Activated B cell treated with CpG ODN at 0.5 μM for 24 hours (primary cell): ENCODE measurements at regions of chr3 and their contacts with region 1.

Region 1: GRCh38 chr3:150546226-150547044 is at the starts of genes EIF2A and SERP1:
- DNase-seq: peak; percentile 98
- ATAC-seq: peak; percentile 92
- H3K4me3 Mint-ChIP-seq: peak within 1 kb of the TSS; percentile 96
- H3K27ac Mint-ChIP-seq: peak within 1 kb of the TSS; percentile 99
- H3K4me1 Mint-ChIP-seq: peaks cover 50% of the 10 kb centered on the region
- H3K27me3 Mint-ChIP-seq: no peaks in the 10 kb centered on the region
- CTCF ChIP-seq: no peak
- total RNA-seq, gene EIF2A: 105 and 109 TPM in 2 replicates
- total RNA-seq, gene SERP1: 87.2 and 88.2 TPM in 2 replicates

Region 2: DNA sequence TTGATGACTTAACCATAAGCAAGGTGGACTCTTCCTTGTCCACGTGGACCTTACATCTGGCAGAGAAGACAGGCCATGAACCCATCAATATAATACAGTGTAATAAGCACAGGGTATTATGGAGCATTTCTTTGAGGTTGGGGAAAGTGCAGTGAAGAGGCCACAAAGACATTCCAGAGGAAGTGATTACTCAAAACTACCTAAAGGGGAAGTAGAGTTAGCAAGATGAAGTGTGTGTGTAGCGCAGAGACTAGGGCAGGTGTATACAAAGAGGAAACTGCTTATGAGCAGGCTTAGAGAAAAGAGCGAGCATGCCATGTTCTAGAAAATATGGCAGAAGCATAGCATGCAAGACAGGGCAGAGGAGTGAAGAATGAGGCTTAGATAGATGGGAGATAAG is 1342.7 kb before region 1 on chr3:
- CTCF ChIA-PET with region 1: no interaction called
- POLR2A ChIA-PET with region 1: no interaction called
- intact Hi-C with region 1: no loop called
- DNase-seq: no peak
- ATAC-seq: peak; percentile 97
- H3K4me3 Mint-ChIP-seq: peak overlapping the region; percentile 17
- H3K27ac Mint-ChIP-seq: peak overlapping the region; percentile 54
- H3K4me1 Mint-ChIP-seq: peaks cover 18% of the 10 kb centered on the region
- H3K27me3 Mint-ChIP-seq: no peaks in the 10 kb centered on the region
- CTCF ChIP-seq: no peak

Region 3: GRCh38 chr3:150627557-150627956 is 81.1 kb after region 1 on chr3:
- CTCF ChIA-PET with region 1: no interaction called
- POLR2A ChIA-PET with region 1: no interaction called
- intact Hi-C with region 1: no loop called
- DNase-seq: no peak
- ATAC-seq: no peak
- H3K4me3 Mint-ChIP-seq: no peak overlapping the region
- H3K27ac Mint-ChIP-seq: no peak overlapping the region
- H3K4me1 Mint-ChIP-seq: peaks cover 2% of the 10 kb centered on the region
- H3K27me3 Mint-ChIP-seq: no peaks in the 10 kb centered on the region
- CTCF ChIP-seq: no peak

Region 4: DNA sequence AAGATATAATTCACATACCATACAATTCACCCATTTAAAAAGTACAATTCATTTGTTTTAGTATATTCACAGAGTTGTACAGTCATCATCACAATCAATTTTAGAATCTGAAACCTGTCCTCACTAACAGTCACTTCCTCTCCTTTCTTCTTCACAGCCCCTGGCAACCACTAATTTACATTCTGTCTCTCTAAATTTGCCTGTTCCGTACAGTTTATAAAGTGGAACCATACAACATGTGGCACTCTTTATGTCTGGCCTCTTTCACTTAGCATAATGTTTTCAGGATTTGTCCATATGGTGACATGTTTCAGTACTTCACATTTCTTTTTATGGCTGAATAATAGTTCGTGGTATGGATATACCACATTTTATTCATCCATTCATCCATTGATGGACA is 134.6 kb after region 1 on chr3:
- CTCF ChIA-PET with region 1: no interaction called
- POLR2A ChIA-PET with region 1: interaction called, 7 read pairs
- intact Hi-C with region 1: loop called (anchors 1 kb)
- DNase-seq: no peak
- ATAC-seq: peak; percentile 95
- H3K4me3 Mint-ChIP-seq: peak overlapping the region; percentile 80
- H3K27ac Mint-ChIP-seq: peak overlapping the region; percentile 66
- H3K4me1 Mint-ChIP-seq: peaks cover 29% of the 10 kb centered on the region
- H3K27me3 Mint-ChIP-seq: no peaks in the 10 kb centered on the region
- CTCF ChIP-seq: no peak

Region 5: GRCh38 chr3:150887025-150887424 is 340.6 kb after region 1 on chr3:
- CTCF ChIA-PET with region 1: no interaction called
- POLR2A ChIA-PET with region 1: no interaction called
- intact Hi-C with region 1: no loop called
- DNase-seq: no peak
- ATAC-seq: no peak
- H3K4me3 Mint-ChIP-seq: no peak overlapping the region
- H3K27ac Mint-ChIP-seq: no peak overlapping the region
- H3K4me1 Mint-ChIP-seq: no peaks in the 10 kb centered on the region
- H3K27me3 Mint-ChIP-seq: peaks cover 9% of the 10 kb centered on the region
- CTCF ChIP-seq: no peak

Region 6: DNA sequence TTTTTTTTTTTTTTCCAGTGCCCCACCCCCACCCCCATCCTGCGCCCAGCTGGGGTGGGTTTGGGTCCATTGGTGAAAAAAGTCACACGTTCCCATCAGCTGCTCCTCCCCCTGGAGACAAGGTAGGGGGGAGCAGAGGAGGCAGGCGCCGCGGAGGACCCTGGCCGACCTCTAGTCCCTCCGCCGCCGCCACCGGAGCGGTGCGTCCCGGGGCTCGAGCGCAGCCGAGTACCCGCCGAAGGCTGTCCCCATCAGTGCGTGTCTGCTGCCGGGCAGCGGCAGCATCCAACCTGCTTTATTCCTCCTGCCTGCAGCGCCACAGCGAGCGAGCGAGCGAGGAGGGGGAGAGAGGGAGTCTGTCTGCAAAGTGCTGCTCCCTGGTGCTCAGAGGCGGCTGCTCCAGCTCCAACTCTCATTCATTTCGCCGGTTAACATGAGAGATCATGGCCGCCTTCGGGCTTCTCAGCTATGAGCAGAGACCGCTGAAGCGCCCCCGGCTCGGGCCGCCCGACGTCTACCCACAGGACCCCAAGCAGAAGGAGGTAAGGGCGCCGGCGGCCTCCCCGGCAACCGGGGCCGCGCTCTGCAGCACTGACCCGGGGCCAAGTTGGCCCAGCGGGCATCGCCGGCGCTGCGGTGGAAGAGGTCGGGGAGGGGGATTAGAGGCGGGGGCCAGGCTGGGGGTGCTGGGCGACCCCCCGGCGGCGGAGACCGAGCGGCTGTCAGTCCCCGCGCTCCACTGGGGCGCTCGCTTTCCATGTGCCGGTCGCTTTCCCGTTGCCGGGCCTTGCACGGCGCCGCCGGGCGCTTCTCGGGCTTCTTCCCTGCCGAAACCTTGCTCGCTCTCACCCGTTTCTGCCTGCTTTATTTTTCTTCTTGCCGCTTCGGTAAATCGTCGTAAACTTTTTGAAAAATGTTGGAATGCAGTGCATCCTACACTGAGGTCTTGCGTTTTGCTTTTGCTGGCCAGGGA is 540.3 kb after region 1 on chr3:
- CTCF ChIA-PET with region 1: no interaction called
- POLR2A ChIA-PET with region 1: no interaction called
- intact Hi-C with region 1: loop called (anchors 5 kb)
- DNase-seq: peak; percentile 42
- ATAC-seq: peak; percentile 72
- H3K4me3 Mint-ChIP-seq: peak overlapping the region; percentile 89
- H3K27ac Mint-ChIP-seq: peak overlapping the region; percentile 30
- H3K4me1 Mint-ChIP-seq: peaks cover 11% of the 10 kb centered on the region
- H3K27me3 Mint-ChIP-seq: peaks cover 27% of the 10 kb centered on the region
- CTCF ChIP-seq: no peak

Region 7: DNA sequence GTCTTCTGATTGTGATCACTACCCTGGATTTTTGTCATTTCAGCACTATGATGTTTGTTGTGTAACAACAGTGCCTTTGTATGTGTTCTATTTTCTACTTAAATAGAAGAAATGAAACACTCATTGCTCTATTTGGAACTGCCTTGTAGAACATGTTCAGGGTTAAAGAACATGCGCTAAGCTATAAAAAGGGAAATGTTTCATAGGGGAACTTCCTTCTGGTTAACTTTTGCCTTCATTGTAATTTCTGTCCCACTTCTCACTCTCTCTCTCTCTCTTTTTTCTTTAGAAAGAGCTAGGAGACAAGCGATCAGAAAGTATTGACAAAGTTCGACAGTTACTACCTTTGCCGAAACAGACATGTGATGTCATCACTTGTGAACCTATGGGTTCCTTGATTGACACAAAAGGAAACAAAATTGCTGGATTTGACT is 838.3 kb after region 1 on chr3 and contains the start of gene P2RY12:
- CTCF ChIA-PET with region 1: no interaction called
- POLR2A ChIA-PET with region 1: no interaction called
- intact Hi-C with region 1: loop called (anchors 5 kb)
- DNase-seq: no peak
- ATAC-seq: peak; percentile 29
- H3K4me3 Mint-ChIP-seq: peak within 1 kb of the TSS; percentile 79
- H3K27ac Mint-ChIP-seq: peak within 1 kb of the TSS; percentile 97
- H3K4me1 Mint-ChIP-seq: peaks cover 76% of the 10 kb centered on the region
- H3K27me3 Mint-ChIP-seq: no peaks in the 10 kb centered on the region
- CTCF ChIP-seq: no peak
- total RNA-seq, gene P2RY12: 0.58 and 0.64 TPM in 2 replicates

Region 8: GRCh38 chr3:151795276-151795675 is 1248.8 kb after region 1 on chr3:
- CTCF ChIA-PET with region 1: no interaction called
- POLR2A ChIA-PET with region 1: no interaction called
- intact Hi-C with region 1: no loop called
- DNase-seq: no peak
- ATAC-seq: no peak
- H3K4me3 Mint-ChIP-seq: no peak overlapping the region
- H3K27ac Mint-ChIP-seq: no peak overlapping the region
- H3K4me1 Mint-ChIP-seq: no peaks in the 10 kb centered on the region
- H3K27me3 Mint-ChIP-seq: peaks cover 2% of the 10 kb centered on the region
- CTCF ChIP-seq: no peak